Gastrocnemius medialis (tissue), 4 donors: ENCODE measurements at regions of chr11 and their contacts with region 1.

Region 1: GRCh38 chr11:62394825-62395538 is 23.9 kb upstream of the SCGB1A1 start:
- DNase-seq: peak; percentile 55 to 61
- ATAC-seq: peak; percentile 92 to 95
- H3K4me3 ChIP-seq: peak overlapping the region; percentile 34 to 50 (median 44)
- H3K27ac ChIP-seq: peak overlapping the region; percentile 32 to 67 (median 48)
- H3K4me1 ChIP-seq: peaks cover 20 to 28% of the 10 kb centered on the region in 2 donors
- H3K27me3 ChIP-seq: no peaks in the 10 kb centered on the region
- CTCF ChIP-seq: peak; percentile 43 to 73 (median 71)
- POLR2A ChIP-seq: no peak

Region 2: DNA sequence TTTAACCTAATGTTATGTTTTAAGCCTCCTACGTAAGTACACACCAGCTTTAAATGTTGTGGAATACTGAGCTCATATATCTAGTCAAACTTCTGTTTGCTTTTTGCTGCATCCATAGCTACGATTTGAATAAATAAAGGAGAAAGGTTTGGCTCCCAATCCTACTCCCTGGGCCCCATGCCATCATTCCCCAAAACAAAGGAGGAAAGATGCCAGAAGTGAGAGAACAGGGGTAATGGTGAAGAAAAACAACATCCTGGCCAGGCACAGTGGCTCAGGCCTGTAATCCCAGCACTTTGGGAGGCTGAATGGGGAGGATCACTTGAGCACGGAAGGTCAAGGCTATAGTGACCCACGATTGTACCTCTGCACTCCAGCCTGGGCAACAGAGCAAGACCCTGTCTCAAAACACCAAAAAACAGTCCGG is 50.3 kb after region 1 on chr11:
- in situ Hi-C with region 1: no loop called
- intact Hi-C with region 1: no loop called
- DNase-seq: no peak
- ATAC-seq: no peak
- H3K4me3 ChIP-seq: peak overlapping the region in 2 of 4 donors; percentile 41 to 65
- H3K27ac ChIP-seq: peak overlapping the region; percentile 50 to 80 (median 73)
- H3K4me1 ChIP-seq: peaks cover 18 to 34% of the 10 kb centered on the region in 2 donors
- H3K27me3 ChIP-seq: no peaks in the 10 kb centered on the region
- CTCF ChIP-seq: no peak
- POLR2A ChIP-seq: no peak

Region 3: GRCh38 chr11:62542750-62543567 is 148.0 kb after region 1 on chr11:
- in situ Hi-C with region 1: loop called in 1 of 4 experiments (anchors 25 kb)
- intact Hi-C with region 1: loop called (anchors 2 kb)
- DNase-seq: peak; percentile 80 to 90
- ATAC-seq: peak; percentile 37 to 40
- H3K4me3 ChIP-seq: peak overlapping the region; percentile 76 to 95 (median 90)
- H3K27ac ChIP-seq: peak overlapping the region; percentile 97 to 100 (median 100)
- H3K4me1 ChIP-seq: peaks cover 62 to 65% of the 10 kb centered on the region in 2 donors
- H3K27me3 ChIP-seq: no peaks in the 10 kb centered on the region
- CTCF ChIP-seq: peak; percentile 99 to 100 (median 100)
- POLR2A ChIP-seq: peak; percentile 60 to 63

Region 4: GRCh38 chr11:62601394-62602140 is 206.6 kb after region 1 on chr11 and contains the start of gene MTA2:
- in situ Hi-C with region 1: no loop called
- intact Hi-C with region 1: loop called (anchors 5 kb)
- DNase-seq: peak; percentile 97
- ATAC-seq: peak; percentile 83 to 85
- H3K4me3 ChIP-seq: peak within 1 kb of the TSS; percentile 84 to 99 (median 98)
- H3K27ac ChIP-seq: peak within 1 kb of the TSS; percentile 87 to 97 (median 94)
- H3K4me1 ChIP-seq: peaks cover 17 to 29% of the 10 kb centered on the region in 2 donors
- H3K27me3 ChIP-seq: no peaks in the 10 kb centered on the region
- CTCF ChIP-seq: no peak
- POLR2A ChIP-seq: peak; percentile 43 to 57
- total RNA-seq, gene MTA2: 28.0 to 47.1 (median 31.7) TPM

Region 5: DNA sequence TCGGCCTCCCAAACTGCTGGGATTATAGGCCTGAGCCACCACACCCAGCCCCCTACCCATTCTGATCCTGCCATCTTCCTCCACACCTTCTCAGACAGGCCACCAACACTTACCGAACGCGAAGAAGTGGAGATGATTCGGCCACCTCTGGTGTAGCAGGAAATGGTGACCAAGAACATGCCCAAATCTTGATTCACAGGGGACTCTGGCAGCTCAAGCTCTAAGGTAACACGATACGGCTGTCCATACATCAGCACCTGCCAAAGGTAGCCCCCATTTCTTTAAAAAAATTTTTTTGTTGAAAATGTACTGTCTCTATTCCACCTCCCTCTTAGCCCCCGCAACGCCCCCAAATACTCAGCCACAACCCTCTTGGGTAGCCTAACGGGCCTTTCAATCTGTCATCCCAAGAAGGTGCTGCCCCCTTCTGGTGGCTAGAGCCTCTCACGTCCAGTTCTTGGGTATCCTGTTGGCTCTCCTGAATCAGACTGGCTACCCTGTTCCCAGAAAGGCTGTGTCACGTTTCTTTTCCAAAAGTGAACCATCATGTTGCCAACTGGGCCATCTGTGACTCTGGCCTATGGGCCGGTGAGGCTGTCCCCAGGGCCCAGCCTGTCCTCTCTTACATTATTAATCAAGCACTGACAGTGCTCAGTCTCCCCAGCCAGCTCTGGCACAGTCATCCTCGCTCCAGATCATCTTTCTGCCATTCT is 299.6 kb after region 1 on chr11:
- in situ Hi-C with region 1: loop called in 2 of 4 experiments (anchors 25 kb)
- intact Hi-C with region 1: loop called (anchors 1 kb)
- DNase-seq: peak; percentile 84 to 92
- ATAC-seq: peak; percentile 98 to 99
- H3K4me3 ChIP-seq: no peak overlapping the region
- H3K27ac ChIP-seq: peak overlapping the region; percentile 65 to 88 (median 84)
- H3K4me1 ChIP-seq: peaks cover 20 to 27% of the 10 kb centered on the region in 2 donors
- H3K27me3 ChIP-seq: no peaks in the 10 kb centered on the region
- CTCF ChIP-seq: peak; percentile 85 to 90 (median 88)
- POLR2A ChIP-seq: peak in 1 of 2 donors; percentile 24

Region 6: GRCh38 chr11:62860835-62861563 is 466.0 kb after region 1 on chr11:
- in situ Hi-C with region 1: loop called (anchors 25 kb)
- intact Hi-C with region 1: loop called (anchors 2 kb)
- DNase-seq: no peak
- ATAC-seq: no peak
- H3K4me3 ChIP-seq: no peak overlapping the region
- H3K27ac ChIP-seq: no peak overlapping the region
- H3K4me1 ChIP-seq: peaks cover 0 to 7% of the 10 kb centered on the region in 2 donors
- H3K27me3 ChIP-seq: no peaks in the 10 kb centered on the region
- CTCF ChIP-seq: no peak
- POLR2A ChIP-seq: no peak